Dendritic cell treated with granulocyte-macrophage colony-stimulating factor and Interleukin-4, amounts not matched to agents 40 ng/mL and 50 ng/mL, for 4 days (primary cell): ENCODE measurements at regions of chr6 and their contacts with region 1.

Region 1: DNA sequence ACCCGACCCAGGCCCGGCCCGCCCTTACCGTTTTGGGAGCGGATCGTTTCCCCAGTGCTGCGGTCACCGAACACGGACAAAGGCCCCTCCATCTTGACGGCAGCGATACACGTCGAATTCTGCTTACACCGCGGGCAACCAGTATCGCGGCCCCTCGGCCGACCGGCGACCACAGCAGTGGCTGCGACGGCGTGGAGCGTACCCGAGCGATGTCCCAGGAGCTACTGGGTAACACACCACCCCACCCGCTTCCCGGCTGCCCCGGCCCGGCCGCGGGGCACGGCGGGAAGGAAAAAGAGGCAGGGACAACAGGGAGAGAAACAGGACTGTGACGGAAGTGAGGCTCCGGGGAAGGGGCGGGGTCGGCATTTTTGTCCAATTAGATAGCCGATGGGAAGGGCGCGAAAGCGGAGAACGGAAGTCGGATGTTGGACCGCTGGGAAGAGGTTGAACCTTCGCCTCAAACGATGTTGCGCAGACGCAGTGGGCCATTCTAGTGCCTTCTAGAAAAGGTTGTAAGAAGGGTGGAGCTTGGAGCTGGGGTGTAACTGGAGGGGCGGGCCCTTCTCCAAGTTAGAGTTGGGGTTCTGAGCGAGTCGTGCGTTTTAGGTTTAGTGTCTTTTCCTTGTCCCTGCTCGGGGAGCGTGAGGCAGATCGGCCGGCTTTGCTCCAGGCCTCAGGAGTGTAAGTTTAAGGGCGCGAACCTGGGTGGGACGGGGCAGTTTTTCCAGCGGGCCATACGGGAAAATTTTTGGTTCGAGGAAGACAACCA is at the start of gene TCP1:
- H3K4me3 Mint-ChIP-seq: peak within 1 kb of the TSS; percentile 91
- H3K27ac Mint-ChIP-seq: peak within 1 kb of the TSS; percentile 88
- H3K4me1 Mint-ChIP-seq: peaks cover 36% of the 10 kb centered on the region
- H3K27me3 Mint-ChIP-seq: no peaks in the 10 kb centered on the region

Region 2: GRCh38 chr6:159726918-159727716 is 62.4 kb before region 1 on chr6 and contains the start of gene WTAP:
- intact Hi-C with region 1: loop called (anchors 1 kb)
- H3K4me3 Mint-ChIP-seq: peak within 1 kb of the TSS; percentile 90
- H3K27ac Mint-ChIP-seq: peak within 1 kb of the TSS; percentile 97
- H3K4me1 Mint-ChIP-seq: peaks cover 35% of the 10 kb centered on the region
- H3K27me3 Mint-ChIP-seq: no peaks in the 10 kb centered on the region

Region 3: DNA sequence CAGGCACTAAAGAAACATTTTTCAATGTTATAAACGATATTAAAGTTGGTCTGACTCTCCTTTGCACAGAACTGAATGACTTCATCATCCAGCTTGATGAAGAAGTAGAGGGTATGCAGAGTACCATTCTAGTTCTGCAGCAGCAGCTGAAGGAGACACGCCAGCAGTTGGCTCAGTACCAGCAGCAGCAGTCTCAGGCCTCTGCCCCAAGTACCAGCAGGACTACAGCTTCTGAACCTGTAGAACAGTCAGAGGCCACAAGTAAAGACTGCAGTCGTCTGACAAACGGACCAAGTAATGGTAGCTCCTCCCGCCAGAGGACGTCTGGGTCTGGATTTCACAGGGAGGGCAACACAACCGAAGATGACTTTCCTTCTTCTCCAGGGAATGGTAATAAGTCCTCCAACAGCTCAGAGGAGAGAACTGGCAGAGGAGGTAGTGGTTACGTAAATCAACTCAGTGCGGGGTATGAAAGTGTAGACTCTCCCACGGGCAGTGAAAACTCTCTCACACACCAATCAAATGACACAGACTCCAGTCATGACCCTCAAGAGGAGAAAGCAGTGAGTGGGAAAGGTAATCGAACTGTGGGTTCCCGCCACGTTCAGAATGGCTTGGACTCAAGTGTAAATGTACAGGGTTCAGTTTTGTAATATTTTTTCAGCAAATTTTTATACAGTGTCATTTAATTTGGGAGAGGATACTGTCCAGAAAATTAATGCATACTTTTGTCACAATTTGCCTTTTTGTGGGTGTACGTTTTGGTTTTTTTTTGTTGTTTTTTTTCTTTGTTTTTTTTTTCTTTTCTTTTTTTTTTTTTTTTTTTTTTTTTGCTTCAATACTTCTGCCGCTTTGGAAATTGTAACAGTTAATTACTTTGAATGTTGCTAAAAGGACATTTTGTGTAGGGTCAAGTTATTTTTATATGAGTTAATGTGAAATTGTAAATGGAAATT is 34.3 kb before region 1 on chr6:
- intact Hi-C with region 1: loop called (anchors 5 kb)
- H3K4me3 Mint-ChIP-seq: no peak overlapping the region
- H3K27ac Mint-ChIP-seq: no peak overlapping the region
- H3K4me1 Mint-ChIP-seq: peaks cover 12% of the 10 kb centered on the region
- H3K27me3 Mint-ChIP-seq: no peaks in the 10 kb centered on the region

Region 4: GRCh38 chr6:159761873-159762680 is 27.5 kb before region 1 on chr6 and contains the start of gene ACAT2:
- intact Hi-C with region 1: loop called (anchors 1 kb)
- H3K4me3 Mint-ChIP-seq: peak within 1 kb of the TSS; percentile 95
- H3K27ac Mint-ChIP-seq: peak within 1 kb of the TSS; percentile 95
- H3K4me1 Mint-ChIP-seq: peaks cover 39% of the 10 kb centered on the region
- H3K27me3 Mint-ChIP-seq: no peaks in the 10 kb centered on the region

Region 5: DNA sequence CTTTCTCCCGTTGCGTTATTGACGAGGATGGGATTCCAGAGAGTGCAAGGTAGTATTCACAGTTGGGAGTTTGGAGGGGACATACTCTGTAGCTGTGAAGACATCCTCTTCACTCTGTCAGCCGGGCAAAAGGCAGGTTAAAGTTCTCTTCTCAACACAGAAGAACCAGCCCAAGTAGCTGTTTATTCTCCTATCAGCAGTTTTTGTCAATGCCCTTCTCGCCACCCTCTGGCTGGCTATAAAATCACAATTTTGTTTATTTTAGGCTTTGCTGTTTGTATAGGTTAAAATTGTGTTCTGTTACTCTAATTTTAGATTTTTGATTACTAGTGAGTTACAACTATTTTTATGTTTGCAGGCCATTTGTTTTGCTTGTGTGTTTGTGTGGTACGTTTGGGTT is 63.3 kb after region 1 on chr6:
- intact Hi-C with region 1: loop called (anchors 5 kb)
- H3K4me3 Mint-ChIP-seq: no peak overlapping the region
- H3K27ac Mint-ChIP-seq: no peak overlapping the region
- H3K4me1 Mint-ChIP-seq: peaks cover 24% of the 10 kb centered on the region
- H3K27me3 Mint-ChIP-seq: no peaks in the 10 kb centered on the region

Region 6: DNA sequence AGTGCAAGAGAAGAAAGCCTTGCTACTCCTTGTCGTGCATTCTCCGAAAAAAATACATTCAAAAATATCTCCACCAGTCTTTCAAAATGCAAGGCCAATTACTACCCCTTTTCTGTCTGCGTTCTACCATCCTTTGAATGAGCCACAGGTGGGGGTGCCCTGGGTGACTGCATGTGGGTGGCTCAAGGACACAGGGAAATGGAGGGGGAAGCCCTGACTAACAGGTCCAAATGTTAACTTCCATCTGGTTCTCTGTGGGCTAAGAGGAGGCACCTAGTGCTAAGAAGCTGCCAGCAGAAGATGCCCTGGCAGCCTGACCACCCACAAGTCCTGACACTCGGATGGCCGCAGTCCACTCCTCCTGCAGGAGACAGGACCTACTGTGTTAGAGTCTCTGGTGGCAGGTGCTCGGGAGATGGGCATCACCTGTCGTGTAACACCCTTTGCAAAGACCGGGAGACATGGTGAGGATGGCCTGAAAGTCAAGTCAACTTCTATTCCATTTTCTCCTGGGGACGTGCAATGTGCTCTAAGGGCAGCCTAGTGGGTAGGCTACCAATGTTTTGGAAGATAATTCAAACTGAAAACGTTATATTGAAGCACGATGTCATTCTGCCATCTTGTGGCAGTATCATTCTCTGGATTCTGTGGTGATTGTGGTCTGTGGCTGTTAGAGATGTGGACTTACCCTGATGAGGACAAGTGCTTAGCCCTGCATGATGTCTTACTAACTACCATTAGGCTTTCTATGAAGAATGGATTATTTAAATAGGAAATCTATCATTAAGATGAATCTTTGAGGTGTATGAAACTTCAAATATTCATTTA is 151.9 kb after region 1 on chr6:
- intact Hi-C with region 1: loop called (anchors 10 kb)
- H3K4me3 Mint-ChIP-seq: no peak overlapping the region
- H3K27ac Mint-ChIP-seq: no peak overlapping the region
- H3K4me1 Mint-ChIP-seq: peaks cover 22% of the 10 kb centered on the region
- H3K27me3 Mint-ChIP-seq: peaks cover 20% of the 10 kb centered on the region

Region 7: DNA sequence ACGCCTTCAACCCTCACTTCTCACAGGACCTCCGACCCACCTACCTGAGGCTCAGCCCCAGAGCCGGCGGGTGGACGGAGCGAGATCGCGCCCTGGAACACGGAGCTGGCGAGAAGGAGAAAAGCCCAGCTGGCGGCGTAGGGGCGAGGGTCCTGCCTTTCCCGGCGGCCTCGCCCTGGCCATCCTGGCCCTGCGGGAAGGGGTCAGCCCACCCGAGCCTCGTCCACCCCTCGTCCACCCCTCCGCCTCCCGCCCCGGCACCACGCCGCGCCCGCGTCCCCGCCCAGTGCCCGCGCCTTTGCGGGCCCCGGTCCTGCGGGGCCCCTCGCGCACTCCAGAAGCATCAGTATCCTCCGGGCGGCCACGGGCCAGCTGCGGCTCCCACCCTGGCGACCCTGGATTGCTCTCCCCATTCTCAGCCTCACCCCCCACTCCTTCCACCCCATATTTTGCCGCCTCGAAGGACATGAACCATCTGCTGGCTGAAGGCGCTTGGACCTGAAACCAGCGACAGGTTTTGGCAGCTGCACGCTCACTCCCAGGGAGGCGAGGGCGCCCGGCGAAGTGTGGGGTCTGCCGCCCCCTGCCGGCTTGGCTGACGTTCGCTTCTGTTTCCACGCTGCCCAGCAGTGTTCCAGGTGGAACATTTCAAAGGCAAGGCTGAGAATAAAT is 977.6 kb after region 1 on chr6:
- intact Hi-C with region 1: no loop called
- H3K4me3 Mint-ChIP-seq: peak overlapping the region; percentile 37
- H3K27ac Mint-ChIP-seq: no peak overlapping the region
- H3K4me1 Mint-ChIP-seq: peaks cover 4% of the 10 kb centered on the region
- H3K27me3 Mint-ChIP-seq: peaks cover 22% of the 10 kb centered on the region